Caco-2 (cell line): ENCODE measurements at regions of chr10 and their contacts with region 1.

Region 1: GRCh38 chr10:116490028-116490662 is 55.6 kb upstream of the PNLIP start:
- DNase-seq: no peak
- H3K4me3 ChIP-seq: no peak overlapping the region
- H3K4me3 Mint-ChIP-seq: no peak overlapping the region
- H3K27ac Mint-ChIP-seq: no peak overlapping the region
- H3K4me1 ChIP-seq: no peaks in the 10 kb centered on the region
- H3K4me1 Mint-ChIP-seq: no peaks in the 10 kb centered on the region
- H3K27me3 ChIP-seq: no peaks in the 10 kb centered on the region
- H3K27me3 Mint-ChIP-seq: peaks cover 6% of the 10 kb centered on the region
- CTCF ChIP-seq: peak; percentile 48 to 56

Region 2: GRCh38 chr10:114507449-114507848 is 1982.7 kb before region 1 on chr10:
- CTCF ChIA-PET with region 1: no interaction called
- POLR2A ChIA-PET with region 1: no interaction called
- intact Hi-C with region 1: no loop called
- DNase-seq: no peak
- H3K4me3 ChIP-seq: no peak overlapping the region
- H3K4me3 Mint-ChIP-seq: no peak overlapping the region
- H3K27ac Mint-ChIP-seq: no peak overlapping the region
- H3K4me1 ChIP-seq: peaks cover 14% of the 10 kb centered on the region
- H3K4me1 Mint-ChIP-seq: peaks cover 14% of the 10 kb centered on the region
- H3K27me3 ChIP-seq: no peaks in the 10 kb centered on the region
- H3K27me3 Mint-ChIP-seq: no peaks in the 10 kb centered on the region
- CTCF ChIP-seq: no peak

Region 3: DNA sequence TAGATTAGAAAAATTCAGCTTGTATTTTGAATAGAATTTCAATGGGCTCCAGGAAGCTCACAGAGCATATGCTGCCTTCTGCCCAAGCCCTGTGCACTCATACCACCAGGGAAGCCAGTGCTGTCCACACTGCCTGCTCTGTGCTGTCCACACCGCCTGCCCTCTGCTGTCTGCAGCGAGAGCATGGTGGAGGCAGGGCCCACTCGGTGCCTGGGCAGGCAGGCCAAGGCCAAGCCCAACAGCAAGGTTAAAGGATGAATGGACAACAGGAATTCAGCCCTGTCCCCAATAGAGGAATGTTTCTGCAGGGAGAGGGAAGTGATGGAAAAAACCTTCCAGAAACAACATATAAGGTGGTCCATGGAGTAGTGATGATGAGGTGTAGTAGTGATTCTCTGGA is 363.9 kb before region 1 on chr10:
- CTCF ChIA-PET with region 1: no interaction called
- POLR2A ChIA-PET with region 1: no interaction called
- intact Hi-C with region 1: no loop called
- DNase-seq: no peak
- H3K4me3 ChIP-seq: no peak overlapping the region
- H3K4me3 Mint-ChIP-seq: no peak overlapping the region
- H3K27ac Mint-ChIP-seq: no peak overlapping the region
- H3K4me1 ChIP-seq: no peaks in the 10 kb centered on the region
- H3K4me1 Mint-ChIP-seq: no peaks in the 10 kb centered on the region
- H3K27me3 ChIP-seq: no peaks in the 10 kb centered on the region
- H3K27me3 Mint-ChIP-seq: no peaks in the 10 kb centered on the region
- CTCF ChIP-seq: no peak

Region 4: DNA sequence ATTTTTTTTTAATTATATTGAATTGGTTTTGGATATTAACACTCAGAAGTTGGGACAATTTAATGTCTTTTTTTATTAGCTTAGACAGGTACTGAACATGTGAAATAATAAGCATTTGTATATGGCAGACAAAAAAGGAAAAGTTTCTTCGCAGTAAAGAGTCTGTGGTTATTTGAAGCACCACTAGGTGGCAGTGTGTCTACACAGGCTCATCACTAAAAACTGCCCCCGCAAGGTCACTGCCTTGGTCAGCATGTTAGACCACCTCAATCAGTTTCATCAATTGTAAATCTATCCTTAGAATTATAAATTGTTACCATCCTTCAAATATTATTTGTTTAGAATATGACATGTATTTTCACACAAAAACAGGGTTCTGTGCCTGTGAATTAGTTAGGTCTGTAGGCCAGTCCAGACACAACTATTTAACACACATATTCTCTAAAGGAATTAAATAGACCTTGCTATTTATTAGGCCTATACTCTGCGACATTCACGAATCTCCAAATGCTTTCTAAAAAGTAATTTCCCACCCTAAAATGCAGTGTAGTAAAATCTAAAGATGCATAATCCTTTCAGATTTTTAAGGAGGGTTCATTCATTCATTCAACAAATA is 45.5 kb before region 1 on chr10:
- CTCF ChIA-PET with region 1: no interaction called
- POLR2A ChIA-PET with region 1: no interaction called
- intact Hi-C with region 1: loop called (anchors 1 kb)
- DNase-seq: peak in 1 of 2 experiments; percentile 43
- H3K4me3 ChIP-seq: no peak overlapping the region
- H3K4me3 Mint-ChIP-seq: no peak overlapping the region
- H3K27ac Mint-ChIP-seq: no peak overlapping the region
- H3K4me1 ChIP-seq: no peaks in the 10 kb centered on the region
- H3K4me1 Mint-ChIP-seq: no peaks in the 10 kb centered on the region
- H3K27me3 ChIP-seq: no peaks in the 10 kb centered on the region
- H3K27me3 Mint-ChIP-seq: peaks cover 17% of the 10 kb centered on the region
- CTCF ChIP-seq: peak; percentile 84 to 86

Region 5: DNA sequence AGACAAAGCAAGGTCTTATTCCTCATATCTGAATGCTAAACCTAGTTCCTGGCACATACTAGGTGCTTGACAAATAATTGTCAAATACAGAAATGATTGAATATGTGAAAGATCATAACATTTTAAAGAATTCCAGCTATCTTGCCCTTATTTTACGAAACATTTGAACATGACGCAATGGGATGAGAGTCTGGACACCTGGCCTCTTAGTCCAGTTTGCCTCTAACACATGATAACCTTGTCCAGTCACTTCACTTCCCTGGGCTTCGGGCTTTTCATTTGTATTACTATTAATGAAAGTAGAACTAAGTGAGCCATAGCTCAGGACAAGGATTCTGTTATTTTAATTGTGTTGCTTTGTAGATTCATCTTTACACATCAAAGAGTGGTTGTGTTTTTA is 29.9 kb before region 1 on chr10:
- CTCF ChIA-PET with region 1: no interaction called
- POLR2A ChIA-PET with region 1: no interaction called
- intact Hi-C with region 1: no loop called
- DNase-seq: no peak
- H3K4me3 ChIP-seq: no peak overlapping the region
- H3K4me3 Mint-ChIP-seq: no peak overlapping the region
- H3K27ac Mint-ChIP-seq: no peak overlapping the region
- H3K4me1 ChIP-seq: no peaks in the 10 kb centered on the region
- H3K4me1 Mint-ChIP-seq: no peaks in the 10 kb centered on the region
- H3K27me3 ChIP-seq: no peaks in the 10 kb centered on the region
- H3K27me3 Mint-ChIP-seq: peaks cover 31% of the 10 kb centered on the region
- CTCF ChIP-seq: no peak

Region 6: GRCh38 chr10:116470768-116471415 is 19.3 kb before region 1 on chr10:
- CTCF ChIA-PET with region 1: no interaction called
- POLR2A ChIA-PET with region 1: no interaction called
- intact Hi-C with region 1: loop called (anchors 2 kb)
- DNase-seq: peak; percentile 47 to 49
- H3K4me3 ChIP-seq: no peak overlapping the region
- H3K4me3 Mint-ChIP-seq: no peak overlapping the region
- H3K27ac Mint-ChIP-seq: no peak overlapping the region
- H3K4me1 ChIP-seq: 0 out of 2 replicates have a peak, but pooled peaks cover 6% of the 10 kb centered on the region
- H3K4me1 Mint-ChIP-seq: peaks cover 13% of the 10 kb centered on the region
- H3K27me3 ChIP-seq: no peaks in the 10 kb centered on the region
- H3K27me3 Mint-ChIP-seq: peaks cover 3% of the 10 kb centered on the region
- CTCF ChIP-seq: peak; percentile 38 to 67